Activated naive CD4-positive, alpha-beta T cell treated with anti-CD3 and anti-CD28 coated beads for 36 hours (primary cell): ENCODE measurements at regions of chr5 and their contacts with region 1.

Region 1: DNA sequence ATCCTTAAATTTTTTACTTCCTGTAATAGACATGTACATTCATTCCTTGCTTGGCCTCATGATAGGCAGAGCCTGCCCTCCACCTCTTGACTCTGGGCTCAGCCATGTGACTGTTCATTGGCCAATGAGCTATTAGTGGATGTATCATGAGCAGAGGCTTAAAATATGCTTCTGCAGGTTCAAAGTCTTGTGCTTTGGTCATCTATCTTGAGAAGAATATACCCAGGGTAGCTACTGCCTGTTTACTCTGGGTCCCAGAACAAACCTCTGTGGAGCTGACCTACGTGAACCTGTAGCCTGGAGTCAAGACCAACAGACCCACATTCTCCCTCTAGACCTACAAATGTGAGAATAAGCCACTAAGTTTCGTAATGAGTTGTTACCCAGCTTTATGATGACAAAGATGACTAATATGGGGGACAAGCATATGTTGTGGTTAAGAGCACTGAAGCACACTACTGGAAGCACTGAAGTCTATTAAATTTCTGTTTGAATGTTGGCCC is 244.4 kb downstream of the MAST4 start:
- DNase-seq: peak; percentile 63
- H3K4me3 Mint-ChIP-seq: peak overlapping the region; percentile 10
- H3K27ac Mint-ChIP-seq: peak overlapping the region; percentile 83
- H3K4me1 Mint-ChIP-seq: peaks cover 27% of the 10 kb centered on the region
- H3K27me3 Mint-ChIP-seq: peaks cover 28% of the 10 kb centered on the region

Region 2: DNA sequence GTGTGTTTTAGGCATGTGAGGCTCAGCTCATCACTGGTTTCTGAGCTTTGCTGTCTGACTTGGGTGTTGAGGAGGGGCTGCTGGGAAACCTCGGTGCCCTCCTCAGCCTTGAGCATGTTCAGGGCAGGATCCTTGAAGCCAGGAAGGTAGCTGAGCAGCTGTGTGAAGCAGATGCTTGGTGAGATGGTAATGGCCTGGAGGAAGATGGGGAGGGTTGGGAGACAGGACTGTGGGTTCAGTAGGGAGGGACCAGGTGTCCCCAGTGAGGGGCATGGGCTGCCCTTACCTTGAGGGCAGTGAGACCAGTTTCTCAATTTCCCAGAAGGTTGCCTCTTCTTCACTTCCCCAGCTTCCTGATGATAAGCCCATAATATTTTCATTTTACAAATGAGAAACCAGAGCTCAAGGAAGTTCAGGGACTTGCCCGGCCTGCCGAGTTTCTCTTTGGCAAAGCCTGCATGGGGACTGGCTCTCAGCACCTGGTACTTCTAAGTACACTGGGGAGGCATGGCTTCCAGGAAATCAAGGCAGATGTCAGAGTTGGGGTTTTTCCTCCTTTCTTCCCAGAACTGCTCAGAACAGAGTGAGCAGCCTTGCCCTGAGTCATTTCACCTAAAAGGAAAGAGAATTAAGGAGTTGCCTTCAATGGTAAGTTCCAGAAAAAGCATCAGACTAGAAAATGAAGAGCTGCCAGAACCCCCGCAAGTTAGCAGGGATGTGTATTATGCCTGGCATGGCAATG is 18.7 kb before region 1 on chr5:
- CTCF ChIA-PET with region 1: interaction called, 3 read pairs
- intact Hi-C with region 1: loop called (anchors 1 kb)
- DNase-seq: peak; percentile 87
- H3K4me3 Mint-ChIP-seq: peak overlapping the region; percentile 33
- H3K27ac Mint-ChIP-seq: peak overlapping the region; percentile 95
- H3K4me1 Mint-ChIP-seq: peaks cover 27% of the 10 kb centered on the region
- H3K27me3 Mint-ChIP-seq: no peaks in the 10 kb centered on the region

Region 3: GRCh38 chr5:66864331-66864840 is 23.8 kb after region 1 on chr5:
- CTCF ChIA-PET with region 1: interaction called, 3 read pairs
- intact Hi-C with region 1: loop called (anchors 2 kb)
- DNase-seq: peak; percentile 39
- H3K4me3 Mint-ChIP-seq: no peak overlapping the region
- H3K27ac Mint-ChIP-seq: no peak overlapping the region
- H3K4me1 Mint-ChIP-seq: no peaks in the 10 kb centered on the region
- H3K27me3 Mint-ChIP-seq: peaks cover 30% of the 10 kb centered on the region

Region 4: DNA sequence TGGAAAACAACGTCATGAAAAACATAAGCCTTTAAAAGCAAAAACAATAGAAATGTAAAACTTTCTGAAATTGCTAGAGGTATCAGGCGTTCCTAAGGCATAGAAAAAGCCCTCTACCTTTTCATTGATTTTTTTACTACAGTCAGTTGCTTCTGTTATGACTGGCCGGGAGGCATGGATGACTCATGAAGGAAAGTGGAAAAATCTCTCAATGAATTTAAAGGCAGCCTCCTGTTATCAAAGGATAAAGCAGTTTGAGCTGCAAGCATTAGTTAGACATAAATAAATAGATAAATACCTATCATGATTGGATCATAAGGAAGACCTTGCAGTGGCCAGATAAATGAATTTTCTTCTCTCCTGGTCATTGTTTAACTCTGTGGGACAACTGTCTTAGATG is 37.3 kb after region 1 on chr5:
- CTCF ChIA-PET with region 1: no interaction called
- intact Hi-C with region 1: loop called (anchors 2 kb)
- DNase-seq: peak; percentile 50
- H3K4me3 Mint-ChIP-seq: no peak overlapping the region
- H3K27ac Mint-ChIP-seq: no peak overlapping the region
- H3K4me1 Mint-ChIP-seq: peaks cover 7% of the 10 kb centered on the region
- H3K27me3 Mint-ChIP-seq: peaks cover 2% of the 10 kb centered on the region

Region 5: DNA sequence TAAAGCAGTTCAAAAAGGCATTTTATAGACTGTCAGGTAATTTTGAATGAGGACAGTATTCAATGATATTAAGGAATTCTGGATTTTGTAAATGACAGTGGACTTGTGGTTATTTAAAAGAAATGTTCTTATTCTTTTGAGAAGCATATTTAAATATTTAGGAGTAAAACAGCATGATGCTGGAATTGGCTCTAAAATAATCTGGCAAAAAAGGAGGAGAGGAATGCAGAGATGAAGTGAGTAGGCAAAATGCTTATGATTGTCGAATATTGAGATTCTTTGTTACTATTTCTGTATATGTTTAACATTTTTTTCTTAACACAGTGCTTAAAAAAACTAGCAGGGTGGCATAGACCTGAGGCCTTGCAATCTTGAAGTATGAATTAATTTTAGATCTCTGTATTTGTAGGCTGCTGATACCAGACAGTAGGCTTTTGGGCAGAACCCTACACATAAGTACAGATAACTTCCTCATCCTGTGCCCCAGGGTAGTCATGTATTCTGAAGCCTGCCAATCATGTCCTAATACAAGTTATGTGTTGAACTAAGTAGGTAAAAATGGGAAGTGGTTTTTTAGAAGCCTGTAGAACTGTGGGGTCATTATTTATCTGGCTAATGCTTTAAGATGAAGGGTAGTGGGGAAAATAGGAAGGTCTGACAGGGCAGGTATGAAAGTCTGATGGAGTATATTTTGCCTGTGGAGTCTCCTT is 346.6 kb after region 1 on chr5:
- CTCF ChIA-PET with region 1: no interaction called
- intact Hi-C with region 1: no loop called
- DNase-seq: no peak
- H3K4me3 Mint-ChIP-seq: no peak overlapping the region
- H3K27ac Mint-ChIP-seq: peak overlapping the region; percentile 2
- H3K4me1 Mint-ChIP-seq: peaks cover 37% of the 10 kb centered on the region
- H3K27me3 Mint-ChIP-seq: no peaks in the 10 kb centered on the region